ENCODE measurements at regions of chr1 and their contacts with region 1.

Region 1: DNA sequence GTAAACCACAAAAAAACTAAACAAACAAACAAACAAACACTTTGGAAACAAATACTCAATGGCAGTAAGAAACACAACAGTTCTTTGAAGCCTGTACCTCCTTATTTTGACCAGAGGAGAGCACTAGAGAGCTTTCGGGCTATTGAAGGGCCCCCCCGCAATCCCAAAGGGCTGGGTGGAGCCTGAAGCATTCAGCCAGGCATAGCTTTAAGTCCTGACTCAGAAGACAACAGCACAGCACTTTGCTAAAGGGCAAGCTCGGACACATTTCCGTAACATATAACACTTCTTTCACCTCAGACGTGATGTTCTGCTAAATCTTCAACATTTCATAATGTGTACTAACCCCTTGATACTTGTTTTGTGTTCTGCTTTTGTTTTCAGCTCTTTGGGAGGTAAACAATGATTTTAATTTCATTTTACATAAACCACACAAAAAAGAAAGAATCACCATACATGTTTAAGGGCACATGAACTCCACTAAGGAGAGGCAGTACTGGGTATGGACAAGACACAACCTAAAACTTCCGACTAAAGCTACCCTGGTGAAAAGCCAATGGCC is 9.7 kb upstream of the SHCBP1L start:
- DNase-seq: peak in 1 of 2 donors; percentile 90
- H3K4me3 ChIP-seq: peak overlapping the region; percentile 32 to 33
- H3K27ac ChIP-seq: peak overlapping the region in 1 of 2 donors; percentile 12
- H3K4me1 ChIP-seq: peaks cover 0 to 2% of the 10 kb centered on the region in 2 donors
- H3K27me3 ChIP-seq: no peaks in the 10 kb centered on the region
- CTCF ChIP-seq: peak; percentile 91 to 92 (median 91)

Region 2: GRCh38 chr1:183075861-183076260 is 113.2 kb after region 1 on chr1:
- intact Hi-C with region 1: loop called (anchors 5 kb)
- DNase-seq: no peak
- H3K4me3 ChIP-seq: no peak overlapping the region
- H3K27ac ChIP-seq: peak overlapping the region; percentile 12 to 13
- H3K4me1 ChIP-seq: peaks cover 11 to 79% of the 10 kb centered on the region in 2 donors
- H3K27me3 ChIP-seq: no peaks in the 10 kb centered on the region
- CTCF ChIP-seq: no peak

Region 3: DNA sequence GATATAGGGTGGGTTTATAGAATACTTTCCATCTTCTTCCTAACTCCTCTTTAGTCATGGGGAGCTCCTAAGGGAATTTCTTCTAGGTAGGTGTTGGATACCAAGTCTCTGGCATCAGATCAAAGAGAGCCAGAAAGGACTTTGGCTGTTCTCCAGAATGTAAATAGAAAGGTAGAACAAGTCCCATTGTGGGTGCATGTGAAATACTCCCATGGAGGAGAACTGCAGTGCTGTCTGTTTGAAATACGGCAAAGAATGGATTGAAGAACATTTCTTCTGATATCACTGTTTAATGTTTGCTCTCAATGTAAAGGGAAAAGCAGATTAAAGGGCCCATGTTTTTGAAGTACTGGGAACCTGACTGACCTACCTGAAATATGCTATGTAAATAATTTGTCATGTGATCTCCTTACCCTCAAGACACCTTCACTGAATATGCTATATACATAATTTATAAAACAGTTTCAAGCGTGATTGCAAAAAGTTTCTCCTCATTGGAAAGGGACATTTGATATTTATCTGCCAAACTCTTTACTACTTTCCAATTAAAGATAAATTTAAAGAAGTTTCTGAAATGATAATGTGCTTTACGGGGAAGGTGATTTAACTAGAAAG is 126.5 kb after region 1 on chr1:
- intact Hi-C with region 1: no loop called
- DNase-seq: no peak
- H3K4me3 ChIP-seq: no peak overlapping the region
- H3K27ac ChIP-seq: no peak overlapping the region
- H3K4me1 ChIP-seq: peaks cover 0 to 32% of the 10 kb centered on the region in 2 donors
- H3K27me3 ChIP-seq: no peaks in the 10 kb centered on the region
- CTCF ChIP-seq: no peak

Region 4: DNA sequence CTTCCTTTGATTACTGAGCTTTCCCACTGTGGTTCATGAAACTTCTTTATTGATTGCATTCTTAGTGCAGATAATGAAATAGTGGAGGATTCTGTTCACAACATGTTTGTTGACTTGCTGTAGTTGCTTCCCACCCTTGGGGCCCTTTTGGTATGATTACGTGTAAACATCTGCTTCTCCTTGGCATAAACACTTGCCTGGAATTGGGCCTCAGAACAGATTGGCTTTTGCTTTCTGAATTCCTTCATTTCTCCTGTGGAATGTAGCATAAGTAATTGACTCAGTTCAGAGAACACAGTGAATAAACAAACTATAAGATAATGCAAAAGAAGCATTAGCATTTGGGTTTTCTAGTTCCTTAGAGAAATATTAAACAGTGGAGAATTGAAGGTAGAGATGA is 163.9 kb after region 1 on chr1:
- intact Hi-C with region 1: loop called (anchors 5 kb)
- DNase-seq: no peak
- H3K4me3 ChIP-seq: no peak overlapping the region
- H3K27ac ChIP-seq: no peak overlapping the region
- H3K4me1 ChIP-seq: no peaks in the 10 kb centered on the region
- H3K27me3 ChIP-seq: no peaks in the 10 kb centered on the region
- CTCF ChIP-seq: no peak

Region 5: DNA sequence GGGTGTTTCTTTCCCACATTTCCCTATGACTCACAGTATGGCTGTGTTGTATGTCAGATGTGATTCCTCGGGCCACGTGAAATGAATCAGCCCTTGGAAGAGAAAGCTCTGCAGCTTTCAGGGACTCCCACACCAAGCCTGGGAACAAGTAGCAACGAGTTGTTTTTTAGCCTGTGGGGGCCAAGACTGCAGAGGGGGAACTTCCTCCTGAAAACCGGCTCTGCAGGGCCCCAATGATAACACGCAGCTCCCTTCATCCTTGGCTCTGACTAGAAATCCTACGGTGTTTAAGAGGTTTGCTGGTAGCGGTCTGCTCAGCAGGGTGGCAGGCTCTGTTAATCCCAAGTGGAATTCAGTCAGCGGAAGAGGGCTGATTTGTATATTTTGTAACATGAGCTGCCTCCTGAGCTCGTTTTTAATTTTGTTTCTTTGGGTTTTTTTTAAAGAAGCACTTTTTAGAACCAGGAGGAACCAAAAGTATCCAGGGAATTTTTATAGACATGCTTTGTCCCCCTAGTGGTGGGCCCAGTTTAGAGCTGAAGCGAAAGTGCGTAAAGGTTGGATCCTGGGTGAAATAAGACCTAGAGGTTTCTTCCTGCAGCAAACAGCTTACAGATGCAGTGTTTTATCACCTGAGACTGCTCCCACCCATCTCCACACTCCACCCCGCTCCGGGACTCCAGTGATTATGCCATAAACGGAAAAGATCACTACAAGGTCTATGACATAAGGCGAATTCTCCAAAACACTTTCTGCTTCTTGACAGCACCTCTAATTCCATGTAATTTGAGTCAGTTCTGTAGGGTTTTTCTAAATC is 272.2 kb after region 1 on chr1:
- intact Hi-C with region 1: loop called (anchors 5 kb)
- DNase-seq: peak; percentile 45 to 88
- H3K4me3 ChIP-seq: peak overlapping the region; percentile 60 to 62
- H3K27ac ChIP-seq: peak overlapping the region; percentile 77
- H3K4me1 ChIP-seq: peaks cover 0 to 11% of the 10 kb centered on the region in 2 donors
- H3K27me3 ChIP-seq: no peaks in the 10 kb centered on the region
- CTCF ChIP-seq: peak in 2 of 3 experiments; percentile 65 to 71

Region 6: DNA sequence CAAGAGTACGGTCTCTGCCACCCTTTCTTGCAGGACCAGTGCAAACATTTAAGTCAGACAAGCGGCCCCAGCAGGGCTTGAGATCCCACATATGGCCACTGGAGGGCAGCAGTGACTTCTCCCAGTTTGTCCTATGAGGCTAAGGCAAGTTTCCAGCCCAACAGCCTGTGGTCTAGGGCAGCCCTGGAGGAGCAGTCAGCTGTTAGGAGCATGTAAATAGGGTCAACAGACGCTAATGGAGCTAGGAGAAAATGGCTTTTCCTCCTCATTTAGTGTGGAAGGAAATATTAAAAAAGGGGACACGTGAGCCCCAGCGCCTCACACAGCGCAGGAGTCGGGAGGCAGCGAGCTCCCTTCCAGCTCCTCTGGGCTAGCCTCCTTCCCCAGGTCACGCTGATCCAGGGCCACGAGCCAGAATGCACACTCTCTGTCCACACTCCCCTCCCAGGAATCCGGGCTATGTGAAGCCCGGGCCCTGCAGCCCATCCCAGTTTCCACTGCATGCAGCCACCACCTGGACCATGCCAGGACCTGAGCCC is 319.0 kb after region 1 on chr1:
- intact Hi-C with region 1: loop called (anchors 1 kb)
- DNase-seq: peak; percentile 69 to 97
- H3K4me3 ChIP-seq: no peak overlapping the region
- H3K27ac ChIP-seq: peak overlapping the region; percentile 58 to 70
- H3K4me1 ChIP-seq: peaks cover 2 to 14% of the 10 kb centered on the region in 2 donors
- H3K27me3 ChIP-seq: no peaks in the 10 kb centered on the region
- CTCF ChIP-seq: peak; percentile 91 to 96 (median 91)

Measured in ascending aorta (tissue), 2 donors.